ENCODE measurements at regions of chrX and their contacts with region 1.

Region 1: DNA sequence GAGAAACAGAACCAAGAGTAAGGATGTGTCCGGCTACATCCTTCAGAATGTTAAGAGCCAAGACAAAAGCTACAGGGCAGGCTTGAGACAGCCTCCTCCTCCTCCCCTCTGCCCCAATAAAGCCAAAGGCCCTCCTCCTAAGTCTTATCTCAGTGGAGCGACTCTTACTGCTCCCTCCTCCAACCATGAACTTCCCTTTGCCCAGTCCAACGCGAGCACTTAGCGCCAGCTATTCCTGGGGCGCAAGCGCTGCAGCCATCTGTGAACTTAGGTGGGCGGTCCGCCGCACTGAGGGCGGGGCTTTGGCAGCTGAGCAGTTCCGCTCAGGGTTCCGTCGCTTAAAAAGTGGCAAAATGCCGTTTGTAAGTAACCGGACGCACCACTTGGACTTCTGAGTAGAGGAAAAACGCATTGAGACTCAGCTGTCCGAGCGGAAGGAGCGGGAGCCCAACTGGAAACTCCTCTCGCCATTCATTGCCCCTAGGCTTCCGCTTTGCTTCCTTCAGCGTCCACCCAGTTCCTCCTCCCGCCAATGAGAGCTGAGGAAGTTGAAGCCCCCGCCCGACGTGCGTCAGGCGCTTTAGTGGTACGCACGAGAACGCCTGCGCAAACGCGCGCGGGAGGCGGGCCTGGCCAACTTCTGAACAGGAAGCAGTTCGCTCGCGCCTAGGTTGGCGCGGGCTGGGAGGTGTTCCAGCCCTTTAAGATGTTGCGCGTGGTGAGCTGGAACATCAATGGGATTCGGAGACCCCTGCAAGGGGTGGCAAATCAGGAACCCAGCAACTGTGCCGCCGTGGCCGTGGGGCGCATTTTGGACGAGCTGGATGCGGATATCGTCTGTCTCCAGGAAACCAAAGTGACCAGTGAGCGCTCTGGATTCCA is at the start of gene APEX2:
- DNase-seq: peak; percentile 96
- H3K4me3 ChIP-seq: peak within 1 kb of the TSS; percentile 55 to 68 (median 62)
- H3K27ac ChIP-seq: peak within 1 kb of the TSS; percentile 84 to 86 (median 84)
- H3K4me1 ChIP-seq: peaks cover 0 to 16% (median 10%) of the 10 kb centered on the region in 4 donors
- H3K27me3 ChIP-seq: no peaks in the 10 kb centered on the region
- CTCF ChIP-seq: no peak
- EP300 ChIP-seq: no peak
- POLR2A ChIP-seq: peak; percentile 36
- total RNA-seq, gene APEX2: 5.4 to 10.1 (median 8.9) TPM

Region 2: GRCh38 chrX:55159551-55159950 is 159.6 kb after region 1 on chrX:
- intact Hi-C with region 1: loop called (anchors 10 kb)
- DNase-seq: no peak
- H3K4me3 ChIP-seq: no peak overlapping the region
- H3K27ac ChIP-seq: no peak overlapping the region
- H3K4me1 ChIP-seq: peaks cover 0 to 14% (median 6%) of the 10 kb centered on the region in 4 donors
- H3K27me3 ChIP-seq: no peaks in the 10 kb centered on the region
- CTCF ChIP-seq: no peak
- EP300 ChIP-seq: no peak
- POLR2A ChIP-seq: no peak